Activated B cell treated with CpG ODN at 0.5 μM for 24 hours (primary cell): ENCODE measurements at regions of chr5 and their contacts with region 1.

Region 1: GRCh38 chr5:94849821-94850736 is 231.6 kb downstream of the SLF1 start:
- DNase-seq: no peak
- ATAC-seq: peak; percentile 80
- H3K4me3 Mint-ChIP-seq: no peak overlapping the region
- H3K27ac Mint-ChIP-seq: no peak overlapping the region
- H3K4me1 Mint-ChIP-seq: no peaks in the 10 kb centered on the region
- H3K27me3 Mint-ChIP-seq: peaks cover 2% of the 10 kb centered on the region
- CTCF ChIP-seq: peak; percentile 53

Region 2: GRCh38 chr5:93582677-93583438 is 1267.2 kb before region 1 on chr5 and contains the start of gene NR2F1:
- CTCF ChIA-PET with region 1: no interaction called
- POLR2A ChIA-PET with region 1: no interaction called
- intact Hi-C with region 1: loop called (anchors 10 kb)
- DNase-seq: no peak
- ATAC-seq: no peak
- H3K4me3 Mint-ChIP-seq: no peak within 1 kb of the TSS
- H3K27ac Mint-ChIP-seq: no peak within 1 kb of the TSS
- H3K4me1 Mint-ChIP-seq: peaks cover 34% of the 10 kb centered on the region
- H3K27me3 Mint-ChIP-seq: peaks cover 34% of the 10 kb centered on the region
- CTCF ChIP-seq: no peak
- total RNA-seq, gene NR2F1: not detected in 2 replicates

Region 3: DNA sequence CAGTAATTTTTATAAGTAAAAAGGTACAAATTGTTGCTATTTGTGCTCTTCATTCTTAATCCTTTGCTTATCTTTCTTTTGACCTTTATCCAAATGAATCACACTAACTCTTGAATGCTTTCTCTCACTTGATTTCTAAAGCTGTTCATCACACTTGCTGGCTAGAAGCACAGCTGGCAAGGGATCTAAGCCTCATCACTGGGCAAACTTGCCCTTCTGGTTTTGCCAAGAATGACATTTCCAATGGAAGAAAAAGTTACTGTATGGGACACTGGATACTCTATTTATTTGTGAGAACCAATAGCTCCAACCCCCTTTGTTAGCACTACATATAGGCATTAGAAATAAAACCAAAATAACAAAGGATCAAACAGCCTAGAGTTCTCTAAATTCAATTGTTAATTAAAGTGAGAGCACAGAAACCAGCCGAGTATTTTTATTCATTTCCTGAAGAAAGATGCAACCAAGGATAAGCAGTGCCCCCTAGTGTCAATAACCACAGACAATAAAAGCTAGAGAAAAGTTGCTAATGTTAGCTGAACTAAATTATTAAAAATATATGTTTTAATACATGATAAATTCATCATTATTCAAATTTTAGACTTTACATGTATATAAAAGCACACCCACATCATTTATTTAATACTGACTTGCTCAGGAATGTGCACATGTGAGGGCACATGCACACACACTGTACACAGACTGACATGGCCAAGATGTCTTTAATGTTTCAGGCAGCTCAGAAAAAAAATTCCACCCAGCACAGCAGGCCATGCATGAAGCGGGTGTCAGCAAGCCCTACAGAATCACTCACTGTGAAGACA is 1048.9 kb before region 1 on chr5:
- CTCF ChIA-PET with region 1: no interaction called
- POLR2A ChIA-PET with region 1: no interaction called
- intact Hi-C with region 1: loop called (anchors 2 kb)
- DNase-seq: no peak
- ATAC-seq: no peak
- H3K4me3 Mint-ChIP-seq: no peak overlapping the region
- H3K27ac Mint-ChIP-seq: no peak overlapping the region
- H3K4me1 Mint-ChIP-seq: peaks cover 3% of the 10 kb centered on the region
- H3K27me3 Mint-ChIP-seq: no peaks in the 10 kb centered on the region
- CTCF ChIP-seq: peak; percentile 28

Region 4: DNA sequence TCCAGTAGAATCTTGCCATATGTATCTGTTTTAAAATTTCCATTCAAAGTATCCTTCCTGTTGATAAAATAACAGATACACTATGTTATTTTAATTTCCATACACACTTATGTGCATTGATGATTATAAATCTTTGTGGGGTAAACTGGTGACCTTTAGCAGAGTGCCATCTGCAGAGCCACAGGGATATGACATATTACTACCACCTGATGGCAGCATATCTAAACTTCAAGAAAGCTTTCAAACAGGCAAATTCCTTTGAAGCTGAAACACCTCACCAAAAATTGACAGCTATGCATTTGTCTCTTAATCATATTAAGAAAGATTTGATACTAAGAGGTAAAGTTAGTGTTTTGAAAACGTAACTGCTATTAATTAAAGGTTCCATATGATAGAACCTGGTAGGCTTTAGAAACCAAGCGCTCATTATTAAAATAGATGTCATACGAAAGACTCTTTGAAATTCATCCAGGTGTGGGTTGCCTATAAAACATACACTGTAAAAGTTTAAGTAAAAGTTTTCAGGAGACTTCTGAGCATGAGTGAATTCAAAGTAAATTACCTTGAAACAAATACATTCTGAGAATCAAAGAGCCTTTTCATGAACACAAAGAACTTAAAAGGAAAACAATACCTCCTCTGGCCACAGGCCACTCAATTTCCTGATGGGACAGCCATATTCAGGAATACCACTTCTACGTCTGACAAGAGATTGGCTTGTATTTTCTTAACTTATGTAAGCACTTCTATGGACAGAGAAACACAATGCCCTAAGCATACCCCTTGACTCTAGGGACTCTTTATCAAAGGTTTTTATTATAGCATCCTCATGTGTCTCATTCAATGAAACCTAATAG is 325.0 kb before region 1 on chr5:
- CTCF ChIA-PET with region 1: interaction called, 11 read pairs
- POLR2A ChIA-PET with region 1: no interaction called
- intact Hi-C with region 1: loop called (anchors 1 kb)
- DNase-seq: no peak
- ATAC-seq: peak; percentile 50
- H3K4me3 Mint-ChIP-seq: no peak overlapping the region
- H3K27ac Mint-ChIP-seq: no peak overlapping the region
- H3K4me1 Mint-ChIP-seq: no peaks in the 10 kb centered on the region
- H3K27me3 Mint-ChIP-seq: no peaks in the 10 kb centered on the region
- CTCF ChIP-seq: no peak

Region 5: GRCh38 chr5:94740286-94740685 is 109.8 kb before region 1 on chr5:
- CTCF ChIA-PET with region 1: interaction called, 3 read pairs
- POLR2A ChIA-PET with region 1: no interaction called
- intact Hi-C with region 1: loop called (anchors 1 kb)
- DNase-seq: no peak
- ATAC-seq: no peak
- H3K4me3 Mint-ChIP-seq: no peak overlapping the region
- H3K27ac Mint-ChIP-seq: no peak overlapping the region
- H3K4me1 Mint-ChIP-seq: peaks cover 7% of the 10 kb centered on the region
- H3K27me3 Mint-ChIP-seq: no peaks in the 10 kb centered on the region
- CTCF ChIP-seq: no peak